GM10248 (cell line): ENCODE measurements at regions of chr5 and their contacts with region 1.

Region 1: DNA sequence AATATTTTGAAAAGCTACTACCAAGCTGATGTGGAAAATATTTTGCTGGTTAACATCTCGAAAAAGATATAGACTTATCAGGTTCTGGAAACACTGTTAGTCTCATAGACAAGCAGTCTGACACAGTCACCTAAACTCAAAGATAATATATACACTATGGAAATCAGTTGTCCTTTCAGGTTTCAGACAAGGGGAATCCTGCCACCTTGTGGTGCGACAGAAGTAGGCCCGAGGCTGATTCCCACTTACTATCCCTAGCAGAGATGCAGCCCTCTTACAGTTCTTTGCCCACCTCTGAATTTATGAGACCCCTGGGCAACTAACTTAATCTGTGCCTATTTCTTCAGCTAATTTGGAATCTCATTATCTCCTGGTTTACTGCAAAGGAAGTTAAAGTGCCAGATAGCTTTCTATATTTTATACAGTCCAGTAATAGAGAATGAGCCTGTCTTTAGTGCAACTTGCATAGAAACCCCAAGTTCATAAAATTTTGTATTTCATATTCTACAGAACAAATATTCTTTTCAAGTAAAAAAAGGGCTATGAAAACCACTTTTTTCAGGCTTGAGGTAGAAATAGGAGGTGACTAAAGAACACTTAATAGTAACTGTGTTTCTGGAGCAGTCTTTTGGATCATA is 16.9 kb downstream of the RAD1 start:
- DNase-seq: peak; percentile 56
- CTCF ChIP-seq: peak; percentile 78

Region 2: GRCh38 chr5:34499001-34499734 is 399.2 kb before region 1 on chr5:
- CTCF ChIA-PET with region 1: interaction called, 19 read pairs
- POLR2A ChIA-PET with region 1: no interaction called
- DNase-seq: peak; percentile 37
- CTCF ChIP-seq: no peak

Region 3: DNA sequence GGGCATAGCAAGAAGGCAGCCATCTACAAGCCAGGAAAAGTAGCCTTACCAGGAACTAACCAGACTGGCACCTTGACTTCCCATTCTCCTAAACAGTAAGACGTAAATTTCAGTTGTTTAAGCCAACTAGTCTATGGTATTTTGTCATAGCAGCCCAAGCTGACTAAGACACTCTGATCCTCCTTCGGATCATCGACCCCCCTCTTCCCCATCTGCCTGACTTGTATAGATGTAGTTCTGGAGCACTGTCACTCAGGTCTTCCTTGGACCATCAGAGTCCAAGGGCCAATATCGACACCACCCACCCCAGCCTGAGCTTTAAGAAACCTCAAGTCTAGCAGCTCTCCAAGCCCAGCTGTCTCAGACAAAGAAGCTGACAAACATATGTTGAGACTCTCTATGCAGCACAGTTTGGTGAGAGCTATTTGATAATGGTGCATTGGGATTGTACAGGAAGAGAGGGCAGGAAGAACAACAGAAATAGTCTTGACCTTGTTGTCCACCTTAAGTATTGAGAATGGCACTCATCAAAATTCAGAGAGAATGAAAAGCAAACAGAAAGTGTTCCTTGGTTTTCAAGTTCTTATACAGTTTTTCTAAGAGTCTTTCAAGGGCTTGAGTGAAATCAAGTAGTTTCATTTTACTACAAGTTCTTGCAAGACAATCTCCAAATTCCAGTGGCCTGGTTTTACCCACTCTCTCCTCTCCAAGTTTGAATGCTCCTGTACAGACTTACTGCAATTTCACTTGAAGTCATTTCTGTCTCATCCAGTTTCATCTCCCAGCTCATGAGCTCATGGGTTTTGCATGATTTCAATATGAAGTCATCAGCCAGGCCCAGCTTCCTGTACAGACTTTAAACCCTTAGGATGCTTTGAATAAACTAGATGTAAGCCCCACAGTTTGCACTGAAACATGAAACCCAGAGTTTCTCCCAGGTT is 364.5 kb before region 1 on chr5:
- CTCF ChIA-PET with region 1: interaction called, 22 read pairs
- POLR2A ChIA-PET with region 1: no interaction called
- DNase-seq: no peak
- CTCF ChIP-seq: no peak

Region 4: DNA sequence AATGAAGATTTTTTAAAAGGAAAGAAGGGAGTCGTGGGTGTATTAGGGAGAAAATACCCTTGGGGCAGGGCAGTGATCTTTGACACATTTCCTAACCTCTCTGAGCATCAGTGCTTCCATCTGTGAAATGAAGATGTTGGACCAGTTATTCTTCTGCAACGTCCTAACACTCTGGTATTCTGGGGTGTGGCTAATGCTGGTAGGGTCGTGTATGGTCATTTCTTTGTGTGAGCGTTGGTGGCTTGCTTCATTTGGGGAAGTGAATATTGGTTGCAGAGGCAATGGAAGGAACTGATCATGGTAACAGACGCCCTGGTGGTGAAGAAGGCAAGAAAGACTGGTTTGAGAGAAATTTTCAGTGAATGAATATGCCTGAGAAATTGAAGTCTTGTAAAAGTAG is 127.3 kb before region 1 on chr5:
- CTCF ChIA-PET with region 1: no interaction called
- POLR2A ChIA-PET with region 1: no interaction called
- DNase-seq: peak; percentile 21
- CTCF ChIP-seq: no peak

Region 5: GRCh38 chr5:34886392-34887119 is 11.8 kb before region 1 on chr5:
- CTCF ChIA-PET with region 1: interaction called, 13 read pairs
- POLR2A ChIA-PET with region 1: no interaction called
- DNase-seq: no peak
- CTCF ChIP-seq: no peak